ENCODE measurements at regions of chr20 and their contacts with region 1.

Region 1: DNA sequence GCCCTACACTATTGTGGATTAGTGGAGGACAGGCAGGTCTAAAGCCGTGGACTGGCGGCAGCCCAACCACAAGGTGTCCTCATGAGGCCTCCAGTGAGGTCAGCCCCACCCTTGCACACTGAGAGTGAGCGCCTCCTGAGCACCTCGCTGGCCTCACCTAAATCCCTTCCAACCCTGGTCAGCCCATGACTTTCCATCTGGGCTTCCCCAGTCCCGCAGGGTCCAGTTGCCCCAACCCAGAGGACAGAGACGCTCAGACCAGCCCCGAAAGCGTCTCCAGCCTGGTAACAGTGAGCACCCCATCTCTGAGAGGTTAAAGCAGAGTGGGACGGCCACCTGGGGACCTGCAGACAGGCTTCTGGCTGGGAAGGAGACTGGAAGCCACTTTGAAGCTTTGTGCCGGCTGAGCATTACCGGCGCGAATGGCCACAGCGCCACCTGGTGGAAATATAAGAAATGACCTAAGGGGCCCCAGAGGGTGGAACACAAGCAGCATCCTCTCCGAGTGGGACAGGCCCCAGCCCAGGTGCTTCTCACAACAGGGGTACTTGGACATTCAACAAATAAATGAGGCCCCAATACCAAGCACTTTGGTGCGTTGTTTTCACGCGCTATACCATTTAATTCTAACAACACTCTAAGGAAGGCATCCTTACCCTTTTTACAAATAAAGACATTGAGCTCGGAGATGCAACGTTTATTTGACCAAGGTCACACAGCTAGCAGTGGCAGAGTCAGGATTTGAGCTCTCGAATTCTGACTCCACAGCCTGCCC is 65.7 kb upstream of the TOP1 start:
- DNase-seq: peak; percentile 49 to 83 (median 66)
- ATAC-seq: peak; percentile 86
- H3K4me3 ChIP-seq: no peak overlapping the region
- H3K4me3 Mint-ChIP-seq: no peak overlapping the region
- H3K27ac ChIP-seq: no peak overlapping the region
- H3K27ac Mint-ChIP-seq: no peak overlapping the region
- H3K4me1 ChIP-seq: peaks cover 19% of the 10 kb centered on the region
- H3K4me1 Mint-ChIP-seq: peaks cover 7% of the 10 kb centered on the region
- H3K27me3 ChIP-seq: no peaks in the 10 kb centered on the region
- H3K27me3 Mint-ChIP-seq: no peaks in the 10 kb centered on the region
- CTCF ChIP-seq: peak; percentile 93

Region 2: GRCh38 chr20:39112178-39112743 is 1850.7 kb before region 1 on chr20:
- CTCF ChIA-PET with region 1: no interaction called
- POLR2A ChIA-PET with region 1: no interaction called
- intact Hi-C with region 1: loop called in 1 of 2 experiments (anchors 5 kb)
- DNase-seq: no peak
- ATAC-seq: no peak
- H3K4me3 ChIP-seq: no peak overlapping the region
- H3K4me3 Mint-ChIP-seq: no peak overlapping the region
- H3K27ac ChIP-seq: no peak overlapping the region
- H3K27ac Mint-ChIP-seq: no peak overlapping the region
- H3K4me1 ChIP-seq: no peaks in the 10 kb centered on the region
- H3K4me1 Mint-ChIP-seq: no peaks in the 10 kb centered on the region
- H3K27me3 ChIP-seq: peaks cover 18 to 37% of the 10 kb centered on the region in 2 experiments
- H3K27me3 Mint-ChIP-seq: peaks cover 78% of the 10 kb centered on the region
- CTCF ChIP-seq: no peak

Region 3: DNA sequence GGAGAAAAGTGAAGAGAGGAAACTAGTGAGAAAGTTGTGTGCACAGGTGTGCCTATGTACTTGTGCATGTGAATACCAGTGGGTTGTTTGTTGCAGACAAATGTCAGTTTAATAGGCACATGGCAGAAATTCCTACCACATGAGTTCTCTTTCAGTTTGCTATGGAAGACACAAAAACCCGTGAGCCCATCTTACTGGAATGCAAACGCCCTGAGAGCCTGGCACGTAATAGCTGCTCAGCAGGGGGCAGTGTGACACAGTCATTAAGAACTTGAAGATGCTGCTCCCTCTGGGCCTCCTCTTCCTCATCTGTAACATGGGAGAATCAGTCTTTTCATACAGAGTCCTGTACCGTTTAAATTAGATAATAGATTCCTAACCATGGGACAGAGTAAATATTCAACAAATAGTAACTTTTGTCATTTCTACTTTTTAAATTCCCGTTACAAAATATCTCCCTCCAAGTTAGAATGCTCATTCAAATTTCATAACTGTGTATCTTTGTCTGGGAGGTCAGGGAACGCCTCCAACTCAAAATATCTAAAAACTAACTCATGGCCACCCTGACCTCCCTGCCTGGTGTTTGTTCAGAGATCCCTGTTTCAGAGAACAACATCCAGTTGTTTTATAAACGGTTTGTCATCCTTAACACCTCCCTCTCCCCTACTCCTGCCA is 1076.8 kb before region 1 on chr20:
- CTCF ChIA-PET with region 1: no interaction called
- POLR2A ChIA-PET with region 1: no interaction called
- intact Hi-C with region 1: loop called in 1 of 2 experiments (anchors 10 kb)
- DNase-seq: peak in 2 of 14 experiments; percentile 10 to 16
- ATAC-seq: no peak
- H3K4me3 ChIP-seq: no peak overlapping the region
- H3K4me3 Mint-ChIP-seq: no peak overlapping the region
- H3K27ac ChIP-seq: no peak overlapping the region
- H3K27ac Mint-ChIP-seq: no peak overlapping the region
- H3K4me1 ChIP-seq: no peaks in the 10 kb centered on the region
- H3K4me1 Mint-ChIP-seq: no peaks in the 10 kb centered on the region
- H3K27me3 ChIP-seq: no peaks in the 10 kb centered on the region
- H3K27me3 Mint-ChIP-seq: no peaks in the 10 kb centered on the region
- CTCF ChIP-seq: no peak

Region 4: DNA sequence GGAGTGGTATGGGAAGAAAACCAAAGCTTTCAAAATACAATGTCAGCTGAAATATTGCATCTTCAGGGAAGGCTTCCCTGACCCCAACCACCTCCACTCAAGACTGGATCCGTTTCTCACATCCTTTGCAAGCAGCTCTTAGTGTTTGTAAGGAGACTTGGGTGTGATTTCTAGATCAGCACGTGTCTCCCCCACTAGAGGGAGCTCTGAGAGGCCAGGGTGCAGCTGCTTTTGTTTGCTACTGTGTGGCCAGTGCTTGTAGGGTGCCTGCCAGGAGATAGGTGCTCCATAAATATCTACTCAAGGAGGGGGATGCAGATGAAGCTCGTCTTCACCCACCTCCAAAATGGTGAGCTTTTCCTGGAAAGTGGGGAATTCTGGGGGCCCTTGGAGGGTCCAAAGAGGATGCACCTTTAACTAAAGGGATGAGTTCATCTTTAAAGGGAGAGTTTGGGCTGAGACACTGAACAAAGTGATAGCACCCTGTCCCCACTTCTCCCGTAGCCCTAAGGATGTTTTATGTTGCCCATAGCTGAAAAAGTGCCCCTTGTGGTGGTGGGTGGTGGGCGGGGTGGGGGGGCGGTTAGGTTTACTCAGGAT is 221.3 kb before region 1 on chr20:
- CTCF ChIA-PET with region 1: interaction called, 3 read pairs
- POLR2A ChIA-PET with region 1: no interaction called
- intact Hi-C with region 1: loop called (anchors 2 to 5 kb)
- DNase-seq: peak in 7 of 14 experiments; percentile 2 to 60 (median 30)
- ATAC-seq: no peak
- H3K4me3 ChIP-seq: no peak overlapping the region
- H3K4me3 Mint-ChIP-seq: no peak overlapping the region
- H3K27ac ChIP-seq: no peak overlapping the region
- H3K27ac Mint-ChIP-seq: no peak overlapping the region
- H3K4me1 ChIP-seq: peaks cover 6% of the 10 kb centered on the region
- H3K4me1 Mint-ChIP-seq: no peaks in the 10 kb centered on the region
- H3K27me3 ChIP-seq: no peaks in the 10 kb centered on the region
- H3K27me3 Mint-ChIP-seq: peaks cover 6% of the 10 kb centered on the region
- CTCF ChIP-seq: peak; percentile 11

Region 5: DNA sequence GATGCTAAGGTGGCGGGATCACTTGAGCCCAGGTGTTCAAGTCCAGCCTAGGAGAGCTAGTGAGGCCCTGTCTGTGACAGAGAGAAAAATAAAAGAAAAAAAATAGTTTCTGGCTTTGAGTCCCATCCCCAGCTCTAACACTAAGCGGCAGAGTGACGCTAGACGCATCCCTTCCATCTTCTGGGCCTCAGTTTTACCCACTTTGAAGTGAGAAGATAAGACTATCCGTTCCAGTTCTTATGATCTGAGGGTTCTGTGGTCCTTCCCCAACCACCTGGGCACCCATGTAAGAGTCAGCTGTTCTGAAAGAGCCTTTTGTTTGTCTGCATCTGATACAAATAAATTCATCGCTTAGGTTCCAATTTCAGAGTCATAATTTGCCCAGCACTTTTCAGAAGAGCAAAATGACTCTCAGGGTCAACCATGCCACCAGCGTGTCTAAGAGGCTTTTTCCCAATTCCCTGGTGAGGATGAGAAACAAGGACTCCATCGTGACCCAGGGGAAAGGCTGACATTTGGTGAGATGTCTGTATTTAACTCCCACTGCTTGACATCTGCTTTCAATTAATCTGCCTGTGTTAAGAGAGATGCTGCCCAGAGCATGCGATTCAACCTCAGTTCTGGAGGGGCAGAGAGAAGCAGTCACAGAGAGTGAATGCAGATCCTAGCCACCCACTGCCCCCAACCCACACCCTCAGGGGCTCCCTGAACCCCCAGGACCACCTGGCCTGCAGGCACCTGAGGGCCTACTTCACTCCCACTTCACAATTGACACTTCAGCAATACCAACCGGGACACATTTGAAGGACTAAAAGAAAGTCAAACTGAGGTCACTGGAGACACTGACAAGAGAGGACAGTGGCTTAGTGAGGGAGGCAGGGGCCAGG is 65.9 kb before region 1 on chr20:
- CTCF ChIA-PET with region 1: no interaction called
- POLR2A ChIA-PET with region 1: no interaction called
- intact Hi-C with region 1: no loop called
- DNase-seq: no peak
- ATAC-seq: no peak
- H3K4me3 ChIP-seq: no peak overlapping the region
- H3K4me3 Mint-ChIP-seq: no peak overlapping the region
- H3K27ac ChIP-seq: no peak overlapping the region
- H3K27ac Mint-ChIP-seq: no peak overlapping the region
- H3K4me1 ChIP-seq: no peaks in the 10 kb centered on the region
- H3K4me1 Mint-ChIP-seq: no peaks in the 10 kb centered on the region
- H3K27me3 ChIP-seq: no peaks in the 10 kb centered on the region
- H3K27me3 Mint-ChIP-seq: no peaks in the 10 kb centered on the region
- CTCF ChIP-seq: no peak

Region 6: DNA sequence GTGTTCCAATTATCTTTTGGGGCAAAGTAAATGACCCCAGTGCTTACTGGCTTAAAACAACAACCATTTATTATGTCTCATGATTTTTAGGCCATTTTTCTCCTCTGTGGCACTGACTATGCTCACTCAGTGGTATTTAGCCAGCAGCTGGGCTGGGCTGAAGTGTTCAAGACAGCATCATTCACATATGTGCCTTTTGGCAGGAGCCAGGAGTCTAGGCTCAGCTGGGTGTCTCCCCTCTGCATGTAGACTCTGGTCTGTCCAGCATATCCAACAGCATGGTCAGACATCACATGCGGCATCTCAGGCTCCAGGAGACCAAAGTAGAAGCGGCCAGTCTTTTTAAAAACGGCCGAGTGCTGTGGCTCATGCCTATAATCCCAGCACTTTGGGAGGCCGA is 54.6 kb before region 1 on chr20:
- CTCF ChIA-PET with region 1: no interaction called
- POLR2A ChIA-PET with region 1: no interaction called
- intact Hi-C with region 1: no loop called
- DNase-seq: no peak
- ATAC-seq: no peak
- H3K4me3 ChIP-seq: no peak overlapping the region
- H3K4me3 Mint-ChIP-seq: no peak overlapping the region
- H3K27ac ChIP-seq: no peak overlapping the region
- H3K27ac Mint-ChIP-seq: no peak overlapping the region
- H3K4me1 ChIP-seq: no peaks in the 10 kb centered on the region
- H3K4me1 Mint-ChIP-seq: no peaks in the 10 kb centered on the region
- H3K27me3 ChIP-seq: no peaks in the 10 kb centered on the region
- H3K27me3 Mint-ChIP-seq: peaks cover 4% of the 10 kb centered on the region
- CTCF ChIP-seq: no peak